Dendritic cell treated with granulocyte-macrophage colony-stimulating factor and Interleukin-4, amounts not matched to agents 40 ng/mL and 50 ng/mL, for 4 days (primary cell): ENCODE measurements at regions of chr2 and their contacts with region 1.

Region 1: DNA sequence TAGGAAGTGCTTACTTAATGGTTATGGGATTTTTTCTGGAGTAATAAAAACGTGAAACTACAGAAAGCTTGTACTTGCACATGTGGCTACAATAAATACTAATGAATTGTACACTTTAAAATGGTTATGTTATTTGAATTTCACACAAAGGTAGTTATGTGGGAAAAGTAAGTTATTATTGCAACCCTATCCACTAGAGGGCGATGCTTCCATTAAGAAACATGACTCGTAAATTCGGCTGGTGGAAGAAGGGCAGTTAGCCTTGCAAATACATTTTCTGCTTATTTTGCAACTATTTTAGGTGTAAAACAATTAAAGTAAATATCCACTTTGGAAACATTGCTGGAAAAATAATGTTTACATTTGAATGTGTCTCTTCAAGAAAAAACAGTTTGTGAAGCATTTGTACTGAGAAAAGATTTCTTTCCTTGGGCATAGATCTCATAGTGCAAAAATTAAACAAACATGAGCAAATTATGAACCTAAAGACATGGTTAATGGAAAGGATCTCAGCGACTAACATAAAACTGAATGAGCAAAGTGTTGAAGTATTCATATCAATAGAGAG is 68.1 kb upstream of the CSRNP3 start:
- H3K4me3 Mint-ChIP-seq: no peak overlapping the region
- H3K27ac Mint-ChIP-seq: no peak overlapping the region
- H3K4me1 Mint-ChIP-seq: no peaks in the 10 kb centered on the region
- H3K27me3 Mint-ChIP-seq: peaks cover 4% of the 10 kb centered on the region

Region 2: GRCh38 chr2:165440367-165440766 is 39.0 kb after region 1 on chr2:
- intact Hi-C with region 1: no loop called
- H3K4me3 Mint-ChIP-seq: no peak overlapping the region
- H3K27ac Mint-ChIP-seq: no peak overlapping the region
- H3K4me1 Mint-ChIP-seq: no peaks in the 10 kb centered on the region
- H3K27me3 Mint-ChIP-seq: no peaks in the 10 kb centered on the region

Region 3: DNA sequence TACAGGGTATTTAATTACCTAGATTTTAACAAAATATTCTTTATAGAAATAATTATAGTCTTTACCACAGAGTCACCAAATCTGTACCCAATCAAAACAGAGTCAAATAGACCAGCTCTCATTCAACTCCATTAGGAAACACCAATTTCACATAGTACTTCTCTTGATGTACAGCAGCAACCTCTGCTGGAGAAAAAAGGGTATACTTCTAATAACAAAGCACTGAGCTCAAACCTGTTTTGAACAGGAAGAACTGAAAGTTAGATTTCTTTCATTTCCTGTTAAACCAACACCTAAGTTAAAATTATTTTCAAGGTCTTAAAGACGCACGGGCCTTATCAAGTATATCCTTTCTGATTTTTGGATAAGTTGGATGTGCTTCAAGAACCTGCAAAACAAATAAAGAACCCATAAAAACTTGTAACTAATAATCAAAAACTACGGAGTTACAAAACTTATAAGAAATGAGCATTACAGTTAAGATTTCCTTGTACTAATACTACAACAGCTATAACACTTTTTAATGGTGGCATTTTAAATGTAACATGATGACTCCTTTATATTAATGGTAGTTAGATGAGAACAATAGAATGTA is 473.2 kb after region 1 on chr2:
- intact Hi-C with region 1: loop called (anchors 1 kb)
- H3K4me3 Mint-ChIP-seq: no peak overlapping the region
- H3K27ac Mint-ChIP-seq: no peak overlapping the region
- H3K4me1 Mint-ChIP-seq: peaks cover 14% of the 10 kb centered on the region
- H3K27me3 Mint-ChIP-seq: no peaks in the 10 kb centered on the region